PC-9 (cell line): ENCODE measurements at regions of chr17 and their contacts with region 1.

Region 1: DNA sequence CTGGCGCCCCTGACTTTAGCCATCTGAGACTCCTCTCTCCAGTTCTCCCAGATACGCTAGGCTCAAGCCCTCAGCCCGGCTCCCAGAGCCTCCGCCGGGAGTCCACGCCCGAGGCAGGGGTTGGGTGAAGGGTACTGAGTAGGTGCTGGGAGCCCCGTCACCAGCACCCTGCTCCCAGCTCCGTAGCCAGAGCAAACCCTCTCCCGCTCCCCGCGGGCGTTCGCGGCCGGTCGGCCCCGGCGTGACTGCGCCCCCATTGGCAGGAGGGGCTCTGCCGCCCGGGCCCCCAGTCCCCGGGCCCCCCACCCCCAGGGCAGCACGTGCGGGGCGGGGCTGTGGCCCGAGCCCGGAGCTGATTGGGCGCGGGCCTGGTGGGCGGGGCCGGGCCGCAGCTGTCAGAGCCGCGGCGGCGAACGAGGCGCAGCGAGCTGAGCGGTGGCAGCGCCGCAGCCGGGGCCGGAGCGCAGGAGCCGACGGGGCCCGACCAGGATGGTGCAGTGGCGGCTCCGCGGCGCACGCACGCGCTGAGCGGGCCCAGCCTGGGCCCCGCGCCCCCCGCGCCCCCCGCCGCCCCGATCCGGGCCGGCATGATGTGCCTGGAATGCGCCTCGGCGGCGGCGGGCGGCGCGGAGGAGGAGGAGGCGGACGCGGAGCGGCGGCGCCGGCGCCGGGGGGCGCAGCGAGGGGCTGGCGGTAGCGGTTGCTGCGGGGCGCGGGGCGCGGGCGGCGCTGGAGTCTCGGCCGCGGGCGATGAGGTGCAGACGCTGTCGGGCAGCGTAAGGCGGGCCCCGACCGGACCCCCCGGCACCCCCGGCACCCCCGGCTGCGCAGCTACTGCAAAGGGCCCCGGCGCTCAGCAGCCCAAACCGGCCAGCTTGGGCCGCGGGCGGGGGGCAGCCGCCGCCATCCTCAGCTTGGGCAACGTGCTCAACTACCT is at the start of gene SPNS2:
- DNase-seq: peak; percentile 77 to 84
- H3K4me3 ChIP-seq: peak within 1 kb of the TSS; percentile 81
- H3K27ac ChIP-seq: peak within 1 kb of the TSS; percentile 78
- H3K4me1 ChIP-seq: peaks cover 66% of the 10 kb centered on the region
- H3K27me3 ChIP-seq: no peaks in the 10 kb centered on the region
- CTCF ChIP-seq: no peak
- total RNA-seq, gene SPNS2: 25.7 and 33.8 TPM in 2 replicates

Region 2: GRCh38 chr17:4161179-4161559 is 337.6 kb before region 1 on chr17:
- CTCF ChIA-PET with region 1: no interaction called
- POLR2A ChIA-PET with region 1: interaction called, 11 read pairs
- intact Hi-C with region 1: no loop called
- DNase-seq: peak; percentile 91 to 96
- H3K4me3 ChIP-seq: peak overlapping the region; percentile 45
- H3K27ac ChIP-seq: peak overlapping the region; percentile 95
- H3K4me1 ChIP-seq: peaks cover 48% of the 10 kb centered on the region
- H3K27me3 ChIP-seq: no peaks in the 10 kb centered on the region
- CTCF ChIP-seq: peak; percentile 55

Region 3: DNA sequence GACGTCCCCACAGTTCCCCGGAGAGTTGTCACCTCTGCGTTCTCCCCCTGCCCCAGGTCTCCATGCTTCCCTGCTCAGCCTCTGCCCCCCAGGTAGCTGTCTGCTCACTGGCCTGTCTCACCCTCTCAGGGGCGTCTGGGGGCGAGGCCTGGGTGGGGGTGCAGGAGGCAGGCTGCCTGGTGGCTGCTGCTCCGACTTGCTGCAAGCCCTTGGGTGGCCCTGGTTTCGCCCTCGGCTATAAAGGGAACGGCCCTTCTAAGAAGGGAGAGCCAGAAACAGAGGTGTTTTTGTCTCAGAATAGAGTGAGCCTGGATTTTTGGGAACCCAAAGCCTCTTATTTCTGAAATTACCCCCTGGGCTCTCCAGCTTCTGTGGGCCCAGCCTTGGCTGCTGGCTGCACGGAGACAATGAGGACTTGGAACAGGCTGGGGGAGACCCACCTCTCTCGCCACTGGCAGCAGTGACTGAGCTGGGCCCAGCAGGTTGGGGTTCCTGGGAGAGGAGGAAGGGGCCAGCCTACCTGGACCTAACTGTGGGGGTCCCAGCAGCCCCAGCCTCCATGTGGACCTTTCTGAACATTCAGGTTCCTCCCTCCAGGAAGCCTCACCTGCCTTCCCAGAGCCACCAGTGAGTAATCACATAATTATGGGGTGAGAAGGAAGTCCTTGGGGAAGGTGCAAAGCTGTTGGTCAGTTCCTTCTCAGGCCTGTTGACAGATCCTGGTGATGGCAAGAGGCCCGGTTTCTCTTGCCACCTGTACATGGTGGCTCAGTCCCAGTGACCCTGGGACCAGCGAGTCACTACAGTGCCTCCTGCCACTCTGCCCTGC is 15.5 kb before region 1 on chr17:
- CTCF ChIA-PET with region 1: no interaction called
- POLR2A ChIA-PET with region 1: interaction called, 5 read pairs
- intact Hi-C with region 1: loop called (anchors 2 kb)
- DNase-seq: peak; percentile 88 to 99
- H3K4me3 ChIP-seq: peak overlapping the region; percentile 53
- H3K27ac ChIP-seq: peak overlapping the region; percentile 96
- H3K4me1 ChIP-seq: peaks cover 75% of the 10 kb centered on the region
- H3K27me3 ChIP-seq: no peaks in the 10 kb centered on the region
- CTCF ChIP-seq: no peak

Region 4: GRCh38 chr17:4513995-4514605 is 15.4 kb after region 1 on chr17:
- CTCF ChIA-PET with region 1: interaction called, 7 read pairs
- POLR2A ChIA-PET with region 1: interaction called, 10 read pairs
- intact Hi-C with region 1: loop called (anchors 2 kb)
- DNase-seq: peak; percentile 92 to 93
- H3K4me3 ChIP-seq: peak overlapping the region; percentile 47; the same call in 1 of the 2 replicates
- H3K27ac ChIP-seq: peak overlapping the region; percentile 100
- H3K4me1 ChIP-seq: peaks cover 79% of the 10 kb centered on the region
- H3K27me3 ChIP-seq: no peaks in the 10 kb centered on the region
- CTCF ChIP-seq: no peak

Region 5: DNA sequence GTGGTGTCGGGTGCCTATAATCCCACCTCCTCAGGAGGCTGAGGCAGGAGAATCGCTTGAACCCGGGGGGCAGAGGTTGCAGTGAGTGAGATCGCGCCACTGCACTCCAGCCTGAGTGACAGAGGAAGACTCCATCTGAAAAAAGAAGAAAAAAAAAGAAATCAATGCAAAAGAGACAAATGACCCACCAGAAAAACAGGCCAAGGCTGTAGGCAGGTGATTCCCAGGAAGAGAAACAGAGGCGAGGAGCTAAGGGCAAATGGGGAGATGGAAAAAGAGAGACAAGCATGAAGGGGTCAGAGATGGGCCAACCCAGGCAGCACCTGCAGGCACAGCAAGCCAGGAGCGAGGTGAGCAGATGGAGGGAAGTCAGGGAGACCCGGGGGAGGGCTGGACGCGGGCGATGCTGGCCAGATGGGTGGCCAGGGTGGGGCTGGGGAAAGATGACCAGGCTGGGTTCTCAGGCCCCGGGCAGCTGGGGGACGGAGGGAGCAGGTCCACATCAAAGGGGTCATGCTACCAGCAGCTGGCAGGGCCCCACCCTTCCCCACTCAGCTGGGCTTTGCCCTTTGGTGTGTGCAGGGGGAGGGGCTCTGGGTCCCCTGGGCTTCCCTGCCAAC is 30.9 kb after region 1 on chr17:
- CTCF ChIA-PET with region 1: no interaction called
- POLR2A ChIA-PET with region 1: interaction called, 11 read pairs
- intact Hi-C with region 1: no loop called
- DNase-seq: no peak
- H3K4me3 ChIP-seq: no peak overlapping the region
- H3K27ac ChIP-seq: no peak overlapping the region
- H3K4me1 ChIP-seq: peaks cover 12% of the 10 kb centered on the region; the same call in 1 of the 2 replicates
- H3K27me3 ChIP-seq: no peaks in the 10 kb centered on the region
- CTCF ChIP-seq: no peak

Region 6: GRCh38 chr17:4540224-4540641 is 41.5 kb after region 1 on chr17:
- CTCF ChIA-PET with region 1: no interaction called
- POLR2A ChIA-PET with region 1: interaction called, 13 read pairs
- intact Hi-C with region 1: no loop called
- DNase-seq: no peak
- H3K4me3 ChIP-seq: no peak overlapping the region
- H3K27ac ChIP-seq: 0 out of 2 replicates have a peak overlapping the region, but pooled peaks have one; percentile 26
- H3K4me1 ChIP-seq: no peaks in the 10 kb centered on the region
- H3K27me3 ChIP-seq: no peaks in the 10 kb centered on the region
- CTCF ChIP-seq: no peak; the same call in 1 of the 2 replicates

Region 7: DNA sequence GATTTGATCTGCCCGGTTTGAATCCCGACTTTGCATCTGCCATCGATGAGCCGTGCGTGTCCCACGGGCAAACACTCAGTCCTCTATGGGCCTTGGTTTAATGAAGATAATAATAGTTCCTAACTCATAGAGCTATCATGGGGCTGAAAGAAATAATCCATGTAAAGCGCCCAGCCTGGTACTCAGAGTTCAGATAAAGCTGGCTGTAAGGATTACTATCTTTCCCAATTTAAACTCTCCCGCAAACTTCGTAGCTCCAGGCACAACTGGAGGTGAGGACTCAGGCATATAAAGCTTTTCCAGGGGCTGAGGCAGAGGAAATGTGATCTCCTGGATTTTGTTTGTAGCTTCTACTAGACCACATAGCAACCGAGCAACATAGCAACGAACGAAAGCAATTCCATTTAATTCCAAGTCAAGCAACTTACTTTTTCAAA is 126.5 kb after region 1 on chr17:
- CTCF ChIA-PET with region 1: no interaction called
- POLR2A ChIA-PET with region 1: no interaction called
- intact Hi-C with region 1: loop called (anchors 5 kb)
- DNase-seq: no peak
- H3K4me3 ChIP-seq: no peak overlapping the region
- H3K27ac ChIP-seq: no peak overlapping the region
- H3K4me1 ChIP-seq: no peaks in the 10 kb centered on the region
- H3K27me3 ChIP-seq: peaks cover 9% of the 10 kb centered on the region; the same call in 1 of the 2 replicates
- CTCF ChIP-seq: no peak